Ascending aorta (tissue), 2 donors: ENCODE measurements at regions of chr4 and their contacts with region 1.

Region 1: DNA sequence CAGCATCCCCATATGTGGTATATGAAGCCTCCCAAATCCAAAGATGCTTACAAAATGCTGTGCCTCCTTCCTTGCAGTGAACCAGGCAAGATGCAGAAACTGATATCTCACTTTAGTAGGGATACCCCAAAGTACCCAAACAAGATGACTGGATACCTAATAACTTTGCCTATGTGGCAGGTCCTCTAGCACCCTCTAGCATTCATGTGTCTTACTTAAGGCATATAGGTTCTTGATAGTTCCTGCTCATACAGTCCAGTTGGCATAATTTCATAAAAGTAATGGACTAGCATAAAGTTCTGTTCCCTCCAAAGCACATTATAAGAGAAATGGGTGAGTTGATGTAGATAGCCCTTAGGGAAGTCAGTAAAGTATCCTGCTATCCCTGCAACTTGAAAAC is 36.8 kb upstream of the SPP1 start:
- DNase-seq: no peak
- H3K4me3 ChIP-seq: no peak overlapping the region
- H3K27ac ChIP-seq: no peak overlapping the region
- H3K4me1 ChIP-seq: no peaks in the 10 kb centered on the region
- H3K27me3 ChIP-seq: no peaks in the 10 kb centered on the region
- CTCF ChIP-seq: no peak

Region 2: DNA sequence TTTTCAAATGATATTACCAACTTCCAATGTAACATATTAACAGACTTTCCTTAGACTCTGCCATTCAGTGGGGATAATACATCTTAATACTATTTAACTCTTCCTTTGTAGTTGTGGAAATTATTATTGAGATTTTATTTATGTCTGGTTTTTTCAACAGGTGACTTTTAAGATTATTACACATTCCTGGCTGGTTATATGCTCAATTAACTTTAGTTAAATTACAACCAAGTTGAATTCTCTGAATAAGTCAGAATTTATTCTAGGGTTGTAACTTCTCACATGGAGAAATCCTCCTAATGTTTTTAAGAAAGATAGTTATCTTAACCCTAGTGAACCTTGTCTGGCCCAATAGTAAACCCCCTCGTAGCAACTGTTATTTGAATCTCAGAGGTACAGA is 1196.9 kb before region 1 on chr4:
- intact Hi-C with region 1: no loop called
- DNase-seq: no peak
- H3K4me3 ChIP-seq: no peak overlapping the region
- H3K27ac ChIP-seq: no peak overlapping the region
- H3K4me1 ChIP-seq: no peaks in the 10 kb centered on the region
- H3K27me3 ChIP-seq: no peaks in the 10 kb centered on the region
- CTCF ChIP-seq: no peak

Region 3: GRCh38 chr4:87926554-87927098 is 12.1 kb before region 1 on chr4:
- intact Hi-C with region 1: loop called (anchors 1 kb)
- DNase-seq: no peak
- H3K4me3 ChIP-seq: no peak overlapping the region
- H3K27ac ChIP-seq: no peak overlapping the region
- H3K4me1 ChIP-seq: no peaks in the 10 kb centered on the region
- H3K27me3 ChIP-seq: no peaks in the 10 kb centered on the region
- CTCF ChIP-seq: no peak